HAP-1 (cell line): ENCODE measurements at regions of chr12 and their contacts with region 1.

Region 1: DNA sequence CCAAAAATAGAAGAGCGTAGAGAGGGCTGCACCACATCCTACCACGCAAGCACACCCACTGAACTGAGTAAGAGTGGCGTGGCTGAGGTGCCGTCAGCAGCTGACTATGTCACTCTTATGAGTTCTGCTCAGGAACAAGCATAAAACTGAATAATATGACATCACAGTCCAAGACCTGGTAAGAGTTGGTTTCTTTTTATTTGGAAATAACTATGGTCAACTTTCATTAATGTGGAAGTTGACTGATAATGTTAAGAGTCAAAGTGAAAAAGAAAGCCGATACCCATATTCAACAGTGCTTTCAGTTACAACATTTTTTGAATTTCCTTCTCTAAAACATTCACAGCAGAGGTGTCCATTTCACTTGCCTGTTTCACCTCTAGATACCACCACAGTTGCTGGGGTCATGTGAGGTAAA is 44.6 kb downstream of the GNS start:
- DNase-seq: no peak
- H3K4me3 ChIP-seq: no peak overlapping the region
- H3K4me1 ChIP-seq: no peaks in the 10 kb centered on the region
- H3K27me3 ChIP-seq: no peaks in the 10 kb centered on the region

Region 2: GRCh38 chr12:64392221-64392620 is 322.3 kb before region 1 on chr12:
- in situ Hi-C with region 1: no loop called
- DNase-seq: peak in 1 of 2 experiments; percentile 30
- H3K4me3 ChIP-seq: no peak overlapping the region
- H3K4me1 ChIP-seq: no peaks in the 10 kb centered on the region
- H3K27me3 ChIP-seq: no peaks in the 10 kb centered on the region

Region 3: DNA sequence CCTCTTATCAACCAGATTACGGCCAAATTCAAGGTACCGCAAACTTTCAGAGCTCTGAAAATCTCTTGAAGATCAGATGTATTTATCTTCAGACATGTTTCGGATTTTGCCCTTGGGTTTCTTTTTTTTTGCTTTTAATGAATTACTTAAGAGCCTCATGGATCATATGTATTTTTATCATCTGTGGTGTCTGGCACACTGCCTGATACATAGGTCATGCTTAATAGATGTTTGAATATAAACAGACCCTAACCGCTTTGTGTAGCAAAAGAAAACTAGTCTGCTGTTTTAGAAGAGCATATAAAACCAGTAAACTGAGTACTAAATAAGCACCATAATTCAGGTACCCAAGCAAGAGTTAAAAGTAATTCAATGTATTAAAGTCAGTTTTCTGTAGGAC is 282.8 kb before region 1 on chr12:
- in situ Hi-C with region 1: loop called (anchors 25 kb)
- DNase-seq: no peak
- H3K4me3 ChIP-seq: no peak overlapping the region
- H3K4me1 ChIP-seq: no peaks in the 10 kb centered on the region
- H3K27me3 ChIP-seq: no peaks in the 10 kb centered on the region